SK-N-SH (cell line): ENCODE measurements at regions of chr21 and their contacts with region 1.

Region 1: DNA sequence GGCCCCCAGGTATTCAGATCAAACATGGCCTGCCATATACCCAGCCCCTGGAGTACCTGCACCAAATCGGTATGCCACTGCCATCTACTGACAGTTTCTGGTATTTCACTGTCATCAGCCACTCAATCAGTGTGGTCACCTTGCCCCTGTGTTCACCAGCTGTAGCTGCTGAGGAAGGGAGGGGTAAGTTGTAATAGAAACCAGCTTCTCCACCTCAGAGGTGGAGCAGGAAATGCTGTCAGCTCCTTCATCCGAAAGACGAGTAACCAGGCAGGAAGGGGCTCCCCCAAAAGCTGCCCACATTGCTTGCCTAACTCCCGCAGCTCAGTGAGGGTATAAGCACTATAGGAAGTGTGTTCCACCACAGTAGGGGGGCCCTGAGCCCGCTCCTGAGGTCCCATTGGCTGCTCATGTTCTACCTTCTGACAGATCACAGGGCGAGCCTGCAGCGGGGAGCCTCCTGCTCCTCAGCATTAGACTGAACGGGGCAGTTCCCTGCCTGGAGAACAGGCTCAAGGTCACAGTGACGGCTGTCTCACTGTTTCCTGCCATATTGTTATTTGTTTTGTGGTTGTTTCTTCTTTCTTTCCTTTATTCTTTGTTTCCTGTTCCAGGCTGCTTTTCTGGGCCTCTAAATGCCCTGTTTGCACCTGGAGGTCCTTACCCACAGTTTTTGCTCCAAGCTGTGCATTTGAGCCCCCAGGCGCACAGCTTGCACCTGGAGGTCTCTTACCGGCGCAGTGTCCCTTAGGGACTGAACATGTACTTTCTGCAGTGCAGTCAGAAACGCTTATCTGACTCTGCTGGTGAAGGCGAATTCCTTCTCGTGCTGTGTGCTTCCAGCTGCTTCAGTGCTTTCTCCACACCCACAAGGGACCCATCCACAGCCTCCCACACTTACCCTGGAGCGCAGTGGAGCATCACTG is 1638.3 kb downstream of the MRPL39 start:
- DNase-seq: peak; percentile 47
- H3K4me3 ChIP-seq: no peak overlapping the region
- H3K27ac ChIP-seq: no peak overlapping the region
- H3K4me1 ChIP-seq: peaks cover 0 to 2% of the 10 kb centered on the region in 2 experiments; a peak in 1 of 4 replicates
- H3K27me3 ChIP-seq: no peaks in the 10 kb centered on the region
- CTCF ChIP-seq: peak; percentile 75
- EP300 ChIP-seq: no peak
- RAD21 ChIP-seq: peak; percentile 87

Region 2: DNA sequence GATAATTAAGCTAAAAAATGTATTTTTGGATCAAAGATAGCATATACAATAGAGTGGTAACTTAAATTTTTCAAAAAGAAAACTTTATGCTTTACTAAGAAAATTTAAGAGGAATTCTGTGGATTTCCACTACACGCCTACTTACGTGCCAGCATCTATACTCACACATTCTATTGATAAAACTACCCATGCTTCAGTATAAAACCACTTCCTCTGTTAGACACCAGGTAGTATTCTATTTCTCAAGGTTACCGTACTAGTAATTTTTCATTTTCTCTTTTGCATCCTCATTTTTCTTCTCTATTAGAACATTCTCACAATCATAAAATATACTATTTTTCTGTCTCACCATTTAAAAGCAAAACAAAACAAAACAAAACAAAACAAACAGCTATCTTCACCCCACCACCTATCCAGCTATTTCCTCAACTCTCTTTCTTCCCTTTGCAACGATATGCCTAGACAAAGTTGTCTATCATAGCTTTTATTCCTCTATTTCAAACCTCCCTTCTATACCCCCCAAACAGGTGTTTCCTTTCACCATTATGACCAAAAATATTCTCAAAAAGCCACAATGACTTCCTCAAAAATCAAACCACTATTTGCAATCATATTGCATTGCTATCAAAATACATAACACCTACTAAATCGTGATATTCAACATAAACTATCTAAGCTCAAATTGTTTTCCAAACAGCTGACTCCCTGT is 13.7 kb before region 1 on chr21:
- CTCF ChIA-PET with region 1: interaction called, 10 read pairs
- POLR2A ChIA-PET with region 1: no interaction called
- DNase-seq: no peak
- H3K4me3 ChIP-seq: no peak overlapping the region
- H3K27ac ChIP-seq: no peak overlapping the region
- H3K4me1 ChIP-seq: peaks cover 3 to 8% of the 10 kb centered on the region in 2 experiments; a peak in 3 of 4 replicates
- H3K27me3 ChIP-seq: no peaks in the 10 kb centered on the region
- CTCF ChIP-seq: no peak
- EP300 ChIP-seq: no peak
- RAD21 ChIP-seq: no peak